Right cardiac atrium (tissue), 5 donors: ENCODE measurements at regions of chr15 and their contacts with region 1.

Region 1: GRCh38 chr15:101008158-101009139 is 89.3 kb downstream of the LRRK1 start:
- DNase-seq: peak; percentile 83 to 93 (median 93)
- ATAC-seq: peak; percentile 86 to 88
- H3K4me3 ChIP-seq: peak overlapping the region; percentile 25
- H3K27ac ChIP-seq: no peak overlapping the region
- H3K4me1 ChIP-seq: no peaks in the 10 kb centered on the region
- H3K27me3 ChIP-seq: no peaks in the 10 kb centered on the region

Region 2: GRCh38 chr15:100633763-100634075 is 374.7 kb before region 1 on chr15:
- intact Hi-C with region 1: loop called (anchors 2 to 5 kb)
- DNase-seq: no peak
- ATAC-seq: no peak
- H3K4me3 ChIP-seq: no peak overlapping the region
- H3K27ac ChIP-seq: no peak overlapping the region
- H3K4me1 ChIP-seq: no peaks in the 10 kb centered on the region
- H3K27me3 ChIP-seq: no peaks in the 10 kb centered on the region

Region 3: DNA sequence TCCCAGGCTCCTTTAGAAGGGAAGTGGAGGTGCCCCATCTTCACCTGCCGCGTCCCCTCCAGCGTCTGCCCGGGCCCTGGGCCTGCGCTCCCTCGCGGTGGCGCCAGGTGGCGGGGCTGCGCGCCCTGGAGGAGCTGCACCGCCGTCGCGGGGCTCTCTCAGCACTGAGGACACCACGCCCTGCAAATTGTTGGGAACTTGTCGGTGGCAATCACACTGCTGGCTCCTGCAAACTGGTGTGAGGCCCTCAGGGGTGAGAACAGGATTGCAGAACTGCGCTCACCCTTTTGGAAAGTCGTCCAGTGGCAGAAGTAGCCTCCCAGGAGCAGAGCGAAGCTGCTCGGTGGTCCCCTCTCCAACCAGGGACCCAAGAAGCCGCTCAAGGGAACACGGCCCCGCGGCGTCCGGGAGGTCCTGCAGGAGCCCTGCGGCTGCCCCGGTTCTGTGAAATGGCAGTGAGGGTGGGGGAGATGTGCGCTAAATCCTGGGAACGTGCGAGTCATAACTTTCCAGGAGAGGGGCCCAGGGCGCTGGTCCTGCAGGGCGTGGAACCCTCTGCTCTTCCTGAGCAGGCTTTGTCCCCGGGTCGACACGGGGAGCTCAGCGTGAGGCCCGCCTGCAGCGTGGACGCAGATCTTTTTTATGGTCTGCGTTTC is 90.3 kb before region 1 on chr15:
- intact Hi-C with region 1: loop called (anchors 1 to 5 kb)
- DNase-seq: peak; percentile 82 to 94 (median 91)
- ATAC-seq: peak; percentile 95 to 96
- H3K4me3 ChIP-seq: peak overlapping the region; percentile 93
- H3K27ac ChIP-seq: no peak overlapping the region
- H3K4me1 ChIP-seq: no peaks in the 10 kb centered on the region
- H3K27me3 ChIP-seq: no peaks in the 10 kb centered on the region

Region 4: GRCh38 chr15:100968050-100968966 is 40.1 kb before region 1 on chr15:
- intact Hi-C with region 1: no loop called
- DNase-seq: no peak
- ATAC-seq: no peak
- H3K4me3 ChIP-seq: no peak overlapping the region
- H3K27ac ChIP-seq: no peak overlapping the region
- H3K4me1 ChIP-seq: no peaks in the 10 kb centered on the region
- H3K27me3 ChIP-seq: no peaks in the 10 kb centered on the region